BJ (cell line): ENCODE measurements at regions of chr14 and their contacts with region 1.

Region 1: DNA sequence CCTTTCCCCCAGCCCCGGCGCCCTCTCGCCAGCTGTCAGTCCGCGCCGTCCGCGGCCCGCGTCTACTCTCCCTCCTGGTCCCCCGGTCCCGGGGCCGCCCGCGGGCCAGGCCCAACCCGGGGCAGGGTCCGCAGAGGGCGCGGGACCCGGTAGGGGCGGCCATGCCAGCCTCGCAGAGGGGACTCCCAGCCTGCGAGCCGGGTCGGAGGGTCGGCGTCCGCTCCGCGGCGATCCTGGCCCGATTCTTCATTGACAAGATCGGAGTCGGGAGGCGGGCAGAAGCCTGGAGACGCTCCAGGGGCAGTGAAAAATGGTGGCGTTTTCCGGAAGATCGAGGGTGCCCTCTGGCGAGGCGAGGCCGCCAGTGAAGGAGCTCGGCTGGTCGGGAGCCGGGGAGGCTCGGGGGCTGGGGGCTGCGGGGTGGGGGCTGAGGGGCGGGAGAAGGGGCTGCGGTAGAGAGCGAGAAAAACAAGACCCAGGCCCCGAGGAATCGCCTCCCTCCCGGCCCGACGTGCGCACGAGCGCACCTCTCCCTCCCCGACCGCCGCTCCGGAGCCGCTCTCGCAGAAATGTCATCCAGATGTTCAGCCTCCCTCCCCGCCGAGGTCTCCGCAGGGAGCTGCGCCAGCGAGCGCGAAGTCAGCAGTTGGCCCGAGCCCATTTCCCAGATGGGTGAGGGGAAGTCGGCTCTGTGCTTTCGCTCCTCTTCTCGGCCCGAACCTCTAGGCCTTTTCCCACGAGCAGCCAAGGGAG is 647 bp upstream of the TGFB3 start:
- DNase-seq: no peak
- H3K4me3 ChIP-seq: peak overlapping the region; percentile 54
- H3K27me3 ChIP-seq: no peaks in the 10 kb centered on the region
- CTCF ChIP-seq: peak; percentile 72

Region 2: GRCh38 chr14:75361751-75362433 is 620.5 kb before region 1 on chr14:
- CTCF ChIA-PET with region 1: no interaction called
- POLR2A ChIA-PET with region 1: no interaction called
- DNase-seq: no peak
- H3K4me3 ChIP-seq: no peak overlapping the region
- H3K27me3 ChIP-seq: peaks cover 7% of the 10 kb centered on the region; the same call in 1 of the 2 replicates
- CTCF ChIP-seq: no peak

Region 3: DNA sequence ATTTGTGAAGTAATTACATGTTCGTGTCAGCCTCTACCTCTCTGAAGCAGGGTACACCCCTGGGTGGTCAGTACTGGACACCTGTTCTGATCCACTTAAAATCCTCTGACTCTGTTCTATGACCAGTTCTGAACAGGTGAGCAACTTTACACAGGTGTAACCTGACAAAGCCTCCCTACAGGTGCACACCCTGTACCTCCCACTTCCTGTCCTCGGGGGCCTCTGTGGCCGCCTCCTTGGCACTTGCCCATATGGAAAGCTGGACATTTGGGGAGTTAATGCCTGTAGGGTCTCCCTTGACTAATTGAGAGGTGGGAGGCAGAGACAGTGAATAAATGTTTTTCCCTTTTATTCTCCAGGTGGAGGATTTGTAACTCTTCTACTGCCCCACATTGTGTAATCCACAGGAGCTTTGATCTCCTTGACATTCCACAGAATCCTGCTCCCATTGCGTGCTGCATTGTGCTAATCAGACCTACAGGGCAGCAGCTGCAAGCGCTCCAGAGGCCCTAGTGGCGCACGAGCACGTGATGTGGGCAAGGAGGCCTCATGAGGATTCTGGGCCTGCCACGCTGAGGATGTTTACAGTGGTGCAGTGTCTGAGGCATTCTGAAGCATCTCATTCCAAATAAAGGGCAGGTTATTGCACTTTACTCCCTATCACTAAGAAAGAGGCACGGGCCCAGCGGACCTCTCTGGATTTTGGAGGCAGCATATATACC is 506.0 kb before region 1 on chr14:
- CTCF ChIA-PET with region 1: no interaction called
- POLR2A ChIA-PET with region 1: no interaction called
- DNase-seq: no peak
- H3K4me3 ChIP-seq: no peak overlapping the region
- H3K27me3 ChIP-seq: 0 out of 2 replicates have a peak, but pooled peaks cover 1% of the 10 kb centered on the region
- CTCF ChIP-seq: no peak

Region 4: DNA sequence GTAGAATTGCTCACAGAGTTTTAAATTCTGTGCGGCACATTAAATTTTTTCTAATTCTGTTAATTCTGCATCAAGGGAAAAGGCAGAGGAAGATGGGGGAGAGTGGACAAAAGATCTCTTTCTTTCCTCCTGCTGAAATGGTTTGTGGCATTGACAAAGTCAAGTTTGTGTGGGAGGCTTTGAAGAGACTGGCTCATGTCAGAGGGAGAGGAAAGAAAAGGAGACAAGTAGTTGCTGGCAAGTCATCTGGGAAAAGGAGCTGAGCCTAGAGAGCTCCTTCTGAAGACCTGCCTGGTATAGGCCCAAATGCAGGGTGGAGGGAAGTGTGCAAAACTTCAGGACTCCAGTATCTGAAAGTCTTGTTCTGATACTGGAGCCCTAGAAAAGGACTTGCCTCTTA is 285.1 kb before region 1 on chr14:
- CTCF ChIA-PET with region 1: interaction called, 8 read pairs
- POLR2A ChIA-PET with region 1: interaction called, 16 read pairs
- DNase-seq: no peak
- H3K4me3 ChIP-seq: no peak overlapping the region
- H3K27me3 ChIP-seq: no peaks in the 10 kb centered on the region
- CTCF ChIP-seq: no peak

Region 5: DNA sequence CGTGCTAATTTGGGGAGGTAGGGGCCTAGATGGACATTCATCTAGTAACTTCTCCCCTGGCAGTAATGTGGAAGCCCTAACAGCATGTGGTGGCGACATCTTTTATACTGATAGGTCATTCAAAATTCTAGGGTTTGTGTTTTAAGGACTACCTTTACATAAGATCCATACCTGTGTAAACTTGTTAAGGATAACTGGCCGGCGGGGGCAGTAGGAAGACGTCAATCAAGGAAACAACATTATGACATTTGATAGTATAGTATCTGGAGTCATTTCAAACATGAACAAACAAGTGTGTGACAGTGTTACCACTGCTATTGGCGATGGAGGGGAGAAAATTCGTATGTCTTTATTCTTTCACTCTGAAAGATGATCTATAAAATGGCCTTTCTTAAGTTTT is 201.3 kb before region 1 on chr14:
- CTCF ChIA-PET with region 1: interaction called, 11 read pairs
- POLR2A ChIA-PET with region 1: no interaction called
- DNase-seq: no peak
- H3K4me3 ChIP-seq: no peak overlapping the region
- H3K27me3 ChIP-seq: no peaks in the 10 kb centered on the region
- CTCF ChIP-seq: no peak

Region 6: GRCh38 chr14:75864352-75864751 is 118.1 kb before region 1 on chr14:
- CTCF ChIA-PET with region 1: interaction called, 10 read pairs
- POLR2A ChIA-PET with region 1: no interaction called
- DNase-seq: no peak
- H3K4me3 ChIP-seq: no peak overlapping the region
- H3K27me3 ChIP-seq: no peaks in the 10 kb centered on the region
- CTCF ChIP-seq: no peak

Region 7: DNA sequence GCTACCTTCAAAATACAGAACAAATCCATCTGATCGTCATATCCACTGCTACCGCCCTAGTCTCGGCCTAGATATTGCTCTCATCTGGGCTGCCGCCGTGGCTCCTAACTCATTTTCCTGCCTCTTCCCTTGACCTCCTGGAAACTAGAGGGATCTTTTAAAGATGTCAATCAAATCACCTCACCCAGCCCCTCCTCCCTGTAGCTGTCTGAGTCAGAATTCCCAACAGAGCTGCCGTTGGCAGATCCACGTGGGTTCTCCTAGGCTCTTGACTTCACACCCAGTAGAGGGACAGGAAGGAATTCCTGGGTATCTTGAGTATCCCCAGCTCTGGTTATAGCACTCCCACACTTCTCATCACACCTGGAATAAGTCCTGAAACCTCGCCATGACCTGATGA is 12.6 kb before region 1 on chr14:
- CTCF ChIA-PET with region 1: interaction called, 15 read pairs
- POLR2A ChIA-PET with region 1: no interaction called
- DNase-seq: no peak
- H3K4me3 ChIP-seq: no peak overlapping the region
- H3K27me3 ChIP-seq: peaks cover 3% of the 10 kb centered on the region
- CTCF ChIP-seq: no peak